Activated CD4-positive, alpha-beta T cell treated with anti-CD3 and anti-CD28 coated beads for 36 hours (primary cell): ENCODE measurements at regions of chr19 and their contacts with region 1.

Region 1: DNA sequence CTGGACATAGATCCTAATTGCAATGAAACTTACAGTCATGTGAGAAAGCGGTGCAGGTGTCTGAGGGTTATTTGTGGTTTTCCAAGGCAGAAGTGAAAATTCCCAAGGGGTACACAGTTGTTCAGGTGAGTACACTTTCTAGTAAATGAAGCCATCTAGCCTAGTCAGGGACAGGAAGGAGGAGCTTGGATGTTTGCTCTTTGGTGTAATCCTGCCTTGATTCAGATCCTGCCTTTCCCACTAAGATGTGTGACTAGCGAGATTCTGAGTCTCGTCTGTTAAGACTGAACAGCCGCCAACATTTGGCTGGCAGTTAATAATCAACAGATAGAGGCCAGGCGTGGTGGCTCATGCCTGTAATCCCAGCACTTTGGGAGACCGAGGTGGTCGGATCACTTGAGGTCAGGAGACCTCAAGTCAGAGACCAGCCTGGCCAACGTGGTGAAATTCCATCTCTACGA is 2.5 kb downstream of the RPS9 start:
- DNase-seq: no peak
- ATAC-seq: no peak
- H3K4me3 Mint-ChIP-seq: peak overlapping the region; percentile 97
- H3K27ac Mint-ChIP-seq: peak overlapping the region; percentile 100
- H3K4me1 Mint-ChIP-seq: peaks cover 67% of the 10 kb centered on the region
- H3K27me3 Mint-ChIP-seq: no peaks in the 10 kb centered on the region

Region 2: GRCh38 chr19:53431399-53432087 is 771.6 kb before region 1 on chr19 and contains the start of gene ZNF761:
- CTCF ChIA-PET with region 1: no interaction called
- POLR2A ChIA-PET with region 1: no interaction called
- intact Hi-C with region 1: loop called in 1 of 2 experiments (anchors 5 kb)
- DNase-seq: peak; percentile 98
- ATAC-seq: peak; percentile 99
- H3K4me3 Mint-ChIP-seq: peak within 1 kb of the TSS; percentile 94
- H3K27ac Mint-ChIP-seq: peak within 1 kb of the TSS; percentile 83
- H3K4me1 Mint-ChIP-seq: peaks cover 26% of the 10 kb centered on the region
- H3K27me3 Mint-ChIP-seq: no peaks in the 10 kb centered on the region
- total RNA-seq, gene ZNF761: 10.5 to 11.4 TPM

Region 3: DNA sequence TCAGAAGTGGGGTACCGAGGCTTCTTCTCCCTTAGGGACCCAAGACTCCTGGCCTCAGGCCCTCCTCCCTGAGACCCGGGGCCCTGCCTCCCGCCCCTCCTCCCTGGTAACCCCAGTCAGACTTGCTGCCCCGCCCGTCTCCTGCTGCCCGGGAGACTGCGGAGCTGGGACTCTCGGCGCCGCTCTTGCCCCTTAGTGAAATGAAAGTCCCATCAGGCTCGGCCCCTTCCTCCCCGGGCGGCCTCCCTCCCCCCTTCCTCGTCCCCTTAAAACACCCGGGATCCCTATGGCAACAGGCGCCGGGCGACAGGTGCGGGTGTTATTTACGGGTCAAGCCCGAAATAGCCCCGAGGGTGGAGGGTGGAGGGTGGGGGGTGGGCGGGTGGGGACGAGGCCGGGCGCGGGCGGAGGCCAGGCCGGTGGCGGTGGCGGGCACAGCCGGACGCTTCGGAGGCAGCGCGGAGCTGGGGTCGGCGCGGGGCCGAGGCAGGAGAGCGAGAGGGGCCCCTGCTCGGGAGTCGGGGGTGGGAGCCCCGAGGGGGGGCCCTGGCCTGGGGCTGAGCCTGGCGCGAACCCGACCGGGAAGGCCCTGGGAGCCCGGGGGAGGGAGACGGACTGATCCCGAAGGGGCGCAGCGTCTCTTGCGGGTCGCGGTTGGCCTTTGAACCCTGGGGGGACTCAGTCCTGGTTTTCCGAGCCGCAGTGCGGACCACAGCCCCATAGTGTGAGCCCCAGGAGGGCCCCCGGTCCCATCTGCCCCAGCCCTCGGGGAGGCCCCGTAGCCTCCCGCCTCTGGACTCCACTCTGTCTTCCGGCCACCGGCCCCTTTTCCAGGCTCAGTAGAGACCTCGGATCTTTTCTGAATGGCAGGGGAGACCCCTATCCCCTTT is 211.7 kb before region 1 on chr19 and contains the start of gene CACNG6:
- CTCF ChIA-PET with region 1: no interaction called
- POLR2A ChIA-PET with region 1: no interaction called
- intact Hi-C with region 1: no loop called
- DNase-seq: no peak
- ATAC-seq: no peak
- H3K4me3 Mint-ChIP-seq: no peak within 1 kb of the TSS
- H3K27ac Mint-ChIP-seq: no peak within 1 kb of the TSS
- H3K4me1 Mint-ChIP-seq: peaks cover 5% of the 10 kb centered on the region
- H3K27me3 Mint-ChIP-seq: peaks cover 38% of the 10 kb centered on the region
- total RNA-seq, gene CACNG6: not detected

Region 4: GRCh38 chr19:54115109-54116063 is 87.8 kb before region 1 on chr19 and contains the starts of genes PRPF31 and TFPT:
- CTCF ChIA-PET with region 1: no interaction called
- POLR2A ChIA-PET with region 1: interaction called, 13 read pairs
- intact Hi-C with region 1: loop called in 1 of 2 experiments (anchors 1 kb)
- DNase-seq: peak; percentile 97
- ATAC-seq: peak; percentile 94
- H3K4me3 Mint-ChIP-seq: peak within 1 kb of the TSS; percentile 83
- H3K27ac Mint-ChIP-seq: peak within 1 kb of the TSS; percentile 96
- H3K4me1 Mint-ChIP-seq: peaks cover 25% of the 10 kb centered on the region
- H3K27me3 Mint-ChIP-seq: no peaks in the 10 kb centered on the region
- total RNA-seq, gene PRPF31: 85.5 to 115 TPM
- total RNA-seq, gene TFPT: 28.5 to 39.3 TPM

Region 5: DNA sequence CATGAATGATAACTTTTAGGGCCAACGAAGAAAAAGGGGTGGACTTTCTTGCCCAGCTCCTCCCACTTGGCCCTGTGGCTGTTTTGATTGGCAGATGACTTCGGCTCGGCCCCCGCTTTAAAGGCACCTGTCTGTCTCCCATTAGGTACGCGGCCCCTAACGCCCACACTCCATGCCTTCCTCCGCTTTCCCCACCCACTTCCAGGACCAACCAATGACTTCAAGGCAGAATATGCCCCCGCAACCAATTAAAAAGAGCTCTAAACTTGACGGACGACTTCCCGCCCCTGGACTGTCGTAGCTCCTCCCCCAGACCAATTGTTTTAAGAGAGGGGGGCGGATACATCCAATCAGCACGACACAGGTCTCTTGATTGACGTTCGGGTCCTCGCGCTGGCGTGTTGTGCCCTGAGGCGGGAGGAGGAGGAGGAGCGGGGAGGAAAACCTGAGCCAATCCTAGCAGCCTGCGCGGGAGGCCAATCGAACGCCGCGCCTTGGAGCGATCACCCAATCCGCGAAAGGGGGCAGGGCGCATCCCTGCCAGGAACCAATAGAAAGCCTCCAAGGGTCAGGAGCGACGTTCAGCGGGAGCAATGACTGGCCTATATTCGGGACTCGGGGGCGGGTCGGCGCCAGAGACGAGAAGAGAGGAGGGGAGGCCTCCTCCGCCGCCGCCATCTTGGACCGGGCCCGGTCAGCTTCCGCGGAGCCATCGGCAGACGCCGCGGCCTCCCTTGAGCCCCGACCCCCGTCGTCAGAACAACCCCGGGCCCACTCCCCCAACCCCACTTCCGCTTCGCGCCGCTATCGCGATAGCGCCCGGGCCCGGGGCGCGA is 65.9 kb before region 1 on chr19 and contains the start of gene CNOT3:
- CTCF ChIA-PET with region 1: no interaction called
- POLR2A ChIA-PET with region 1: interaction called, 5 read pairs
- intact Hi-C with region 1: loop called (anchors 1 to 2 kb)
- DNase-seq: peak; percentile 99
- ATAC-seq: peak; percentile 86
- H3K4me3 Mint-ChIP-seq: peak within 1 kb of the TSS; percentile 83
- H3K27ac Mint-ChIP-seq: peak within 1 kb of the TSS; percentile 91
- H3K4me1 Mint-ChIP-seq: peaks cover 44% of the 10 kb centered on the region
- H3K27me3 Mint-ChIP-seq: no peaks in the 10 kb centered on the region
- total RNA-seq, gene CNOT3: 61.0 to 93.8 TPM

Region 6: DNA sequence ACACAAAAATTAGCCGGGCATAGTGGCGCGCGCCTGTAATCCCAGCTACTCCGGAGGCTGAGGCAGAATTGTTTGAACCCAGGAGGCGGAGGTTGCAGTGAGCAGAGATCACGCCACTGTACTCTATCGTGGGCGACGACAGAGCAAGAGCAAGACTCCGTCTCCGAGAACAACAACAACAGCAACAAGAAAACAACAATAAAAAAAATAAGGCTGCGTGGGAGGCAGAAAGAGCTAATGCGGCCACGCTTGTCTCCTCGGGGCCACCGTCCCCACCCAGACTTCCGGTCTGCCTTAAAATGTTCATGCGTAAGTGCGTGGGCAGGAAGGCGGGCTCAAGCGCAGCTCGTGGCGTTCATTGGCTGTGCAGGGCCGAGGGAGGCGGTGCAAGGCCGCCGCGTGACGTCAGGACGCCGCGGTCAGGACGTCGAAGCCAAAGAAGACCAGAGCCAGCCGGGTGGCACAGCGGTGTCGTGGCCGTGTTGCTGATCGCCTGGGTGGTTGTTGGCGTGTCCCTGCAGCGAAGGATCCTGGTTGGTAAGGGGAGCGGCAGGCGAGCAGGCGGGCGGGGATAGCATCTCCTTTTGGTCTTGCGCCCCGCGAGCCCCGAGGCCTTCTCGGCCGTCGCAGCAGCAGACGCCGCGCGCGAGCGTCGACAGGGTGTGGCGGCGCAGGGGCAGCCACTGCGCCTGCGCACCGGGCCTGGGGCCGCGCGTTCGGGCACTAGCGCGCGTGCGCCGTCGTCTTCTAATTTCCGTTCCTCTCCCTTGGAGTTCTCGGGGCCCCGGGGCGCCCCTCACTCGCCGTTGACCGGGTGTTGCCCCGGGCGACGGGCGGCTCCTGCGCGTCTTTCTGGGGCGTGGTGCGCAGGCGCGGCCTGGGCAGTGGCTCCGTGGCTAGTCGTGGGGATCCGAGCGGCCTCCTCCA is 245.9 kb after region 1 on chr19 and contains the start of gene LENG8:
- CTCF ChIA-PET with region 1: no interaction called
- POLR2A ChIA-PET with region 1: no interaction called
- intact Hi-C with region 1: loop called in 1 of 2 experiments (anchors 2 kb)
- DNase-seq: peak; percentile 98
- ATAC-seq: peak; percentile 92
- H3K4me3 Mint-ChIP-seq: peak within 1 kb of the TSS; percentile 98
- H3K27ac Mint-ChIP-seq: peak within 1 kb of the TSS; percentile 98
- H3K4me1 Mint-ChIP-seq: peaks cover 36% of the 10 kb centered on the region
- H3K27me3 Mint-ChIP-seq: no peaks in the 10 kb centered on the region
- total RNA-seq, gene LENG8: 156 to 221 TPM